T-cell (primary cell): ENCODE measurements at regions of chr12 and their contacts with region 1.

Region 1: GRCh38 chr12:54549774-54550451 is 512 bp downstream of the PDE1B start:
- DNase-seq: peak in 9 of 35 experiments; percentile 8 to 21 (median 13)
- ATAC-seq: peak; percentile 51 to 65 (median 58)
- H3K4me3 ChIP-seq: peak overlapping the region; percentile 51 to 86
- H3K4me3 Mint-ChIP-seq: peak overlapping the region; percentile 81 to 88 (median 83)
- H3K27ac ChIP-seq: no peak overlapping the region
- H3K27ac Mint-ChIP-seq: peak overlapping the region; percentile 32 to 61
- H3K4me1 ChIP-seq: peaks cover 2 to 19% of the 10 kb centered on the region in 2 experiments
- H3K4me1 Mint-ChIP-seq: peaks cover 22 to 33% (median 25%) of the 10 kb centered on the region in 3 donors
- H3K27me3 ChIP-seq: peaks cover 0 to 10% of the 10 kb centered on the region in 2 experiments
- H3K27me3 Mint-ChIP-seq: no peaks in the 10 kb centered on the region

Region 2: GRCh38 chr12:54579696-54580333 is 29.9 kb after region 1 on chr12:
- CTCF ChIA-PET with region 1: interaction called in 1 of 2 experiments, 19 read pairs
- POLR2A ChIA-PET with region 1: no interaction called
- DNase-seq: peak; percentile 39 to 85 (median 68)
- ATAC-seq: peak; percentile 90 to 93 (median 92)
- H3K4me3 ChIP-seq: no peak overlapping the region
- H3K4me3 Mint-ChIP-seq: no peak overlapping the region
- H3K27ac ChIP-seq: no peak overlapping the region
- H3K27ac Mint-ChIP-seq: no peak overlapping the region
- H3K4me1 ChIP-seq: peaks cover 0 to 6% of the 10 kb centered on the region in 2 experiments
- H3K4me1 Mint-ChIP-seq: peaks cover 6 to 8% (median 6%) of the 10 kb centered on the region in 3 donors
- H3K27me3 ChIP-seq: peaks cover 0 to 14% of the 10 kb centered on the region in 2 experiments
- H3K27me3 Mint-ChIP-seq: peaks cover 8 to 12% of the 10 kb centered on the region in 2 donors

Region 3: DNA sequence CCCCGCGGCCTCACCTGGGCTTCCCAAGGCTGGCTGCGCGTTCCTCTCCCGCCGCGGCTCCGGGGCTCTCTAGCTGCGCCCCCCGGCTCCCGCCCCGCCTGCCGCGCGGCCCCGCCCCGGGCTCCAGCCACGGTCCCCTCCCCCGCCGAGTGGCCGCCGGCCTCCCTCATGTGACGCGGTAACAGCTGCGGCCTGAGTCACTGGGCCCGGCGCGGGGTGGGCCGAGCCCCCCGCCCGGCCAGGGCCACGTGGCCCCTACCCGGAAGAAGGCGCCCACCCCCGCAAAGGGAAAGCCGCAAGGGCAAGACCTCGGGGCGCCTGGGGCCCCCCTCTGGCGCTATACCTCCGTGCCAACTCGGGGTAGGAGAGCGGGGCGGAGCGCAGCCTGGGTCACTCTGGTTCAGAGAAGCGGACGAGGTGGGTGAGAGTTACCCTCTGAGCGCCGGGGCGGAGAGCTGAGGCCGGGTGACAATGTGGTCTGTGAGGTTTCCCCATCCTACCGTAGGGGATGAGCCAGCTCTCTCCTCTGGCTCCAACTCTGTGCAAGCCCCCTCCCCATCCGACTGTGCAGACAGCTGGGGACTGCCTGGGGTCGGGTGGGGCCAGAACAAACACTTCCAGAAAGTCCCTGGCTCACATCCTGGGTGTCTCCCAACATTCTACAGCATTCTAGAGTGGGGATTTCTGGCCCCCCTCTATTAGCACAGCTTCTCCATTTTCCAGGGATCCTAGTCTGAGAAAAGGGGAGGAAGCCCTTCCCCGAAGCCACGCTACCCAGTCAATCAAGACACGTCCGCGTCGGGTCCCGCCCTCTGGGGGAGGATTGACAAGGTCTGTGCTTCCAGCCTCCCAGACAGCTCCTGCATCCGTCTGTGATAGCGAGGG is 1179.3 kb after region 1 on chr12 and contains the start of gene CD63:
- CTCF ChIA-PET with region 1: no interaction called
- POLR2A ChIA-PET with region 1: interaction called in 1 of 2 experiments, 11 read pairs
- DNase-seq: peak in 19 of 35 experiments; percentile 20 to 65 (median 34)
- ATAC-seq: peak; percentile 54 to 62 (median 60)
- H3K4me3 ChIP-seq: peak within 1 kb of the TSS; percentile 60 to 80
- H3K4me3 Mint-ChIP-seq: peak within 1 kb of the TSS; percentile 83 to 89 (median 83)
- H3K27ac ChIP-seq: peak within 1 kb of the TSS; percentile 87
- H3K27ac Mint-ChIP-seq: peak within 1 kb of the TSS; percentile 95 to 97
- H3K4me1 ChIP-seq: peaks cover 9 to 45% of the 10 kb centered on the region in 2 experiments
- H3K4me1 Mint-ChIP-seq: peaks cover 33 to 47% (median 45%) of the 10 kb centered on the region in 3 donors
- H3K27me3 ChIP-seq: no peaks in the 10 kb centered on the region
- H3K27me3 Mint-ChIP-seq: no peaks in the 10 kb centered on the region
- total RNA-seq, gene CD63: 41.3 to 88.2 (median 73.5) TPM